ENCODE measurements at regions of chr3 and their contacts with region 1.

Region 1: GRCh38 chr3:185498503-185499396 is at the start of gene TMEM41A:
- DNase-seq: peak; percentile 94 to 98 (median 98)
- ATAC-seq: peak; percentile 98
- H3K4me3 ChIP-seq: peak within 1 kb of the TSS; percentile 100
- H3K27ac ChIP-seq: peak within 1 kb of the TSS; percentile 91
- H3K4me1 ChIP-seq: peaks cover 23 to 25% of the 10 kb centered on the region in 2 experiments
- H3K27me3 ChIP-seq: no peaks in the 10 kb centered on the region
- CTCF ChIP-seq: peak in 1 of 3 experiments; percentile 5; a peak in 2 of 6 replicates
- EP300 ChIP-seq: peak; percentile 64
- POLR2A ChIP-seq: peak; percentile 94
- RAD21 ChIP-seq: peak; percentile 14 to 17; a peak in 1 of 4 replicates
- polyA plus RNA-seq, gene TMEM41A: 23.1 to 30.6 TPM

Region 2: DNA sequence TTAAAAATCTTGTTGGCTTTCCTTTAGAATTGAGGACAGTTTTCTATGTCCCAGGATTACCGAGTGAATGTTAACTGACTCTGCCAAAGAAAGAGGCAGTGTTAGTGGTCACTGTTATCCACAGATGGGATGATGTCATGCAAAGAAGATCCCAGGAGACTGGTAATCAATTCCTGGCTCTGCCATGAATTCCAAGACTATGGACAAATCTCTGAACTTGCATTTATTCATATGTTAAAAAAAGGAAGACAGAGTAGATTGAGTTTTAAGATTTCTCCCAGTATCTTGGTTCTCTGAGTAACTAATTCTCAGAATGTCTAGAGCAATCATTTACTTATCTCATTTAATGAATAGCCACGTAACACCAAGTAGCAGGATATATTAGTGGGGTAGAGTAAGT is 147.4 kb before region 1 on chr3:
- CTCF ChIA-PET with region 1: no interaction called
- POLR2A ChIA-PET with region 1: no interaction called
- in situ Hi-C with region 1: no loop called
- intact Hi-C with region 1: no loop called
- DNase-seq: no peak
- ATAC-seq: no peak
- H3K4me3 ChIP-seq: no peak overlapping the region
- H3K27ac ChIP-seq: no peak overlapping the region
- H3K4me1 ChIP-seq: no peaks in the 10 kb centered on the region
- H3K27me3 ChIP-seq: peaks cover 0 to 1% of the 10 kb centered on the region in 2 experiments; a peak in 1 of 5 replicates
- CTCF ChIP-seq: no peak
- EP300 ChIP-seq: no peak
- POLR2A ChIP-seq: no peak
- RAD21 ChIP-seq: no peak

Region 3: DNA sequence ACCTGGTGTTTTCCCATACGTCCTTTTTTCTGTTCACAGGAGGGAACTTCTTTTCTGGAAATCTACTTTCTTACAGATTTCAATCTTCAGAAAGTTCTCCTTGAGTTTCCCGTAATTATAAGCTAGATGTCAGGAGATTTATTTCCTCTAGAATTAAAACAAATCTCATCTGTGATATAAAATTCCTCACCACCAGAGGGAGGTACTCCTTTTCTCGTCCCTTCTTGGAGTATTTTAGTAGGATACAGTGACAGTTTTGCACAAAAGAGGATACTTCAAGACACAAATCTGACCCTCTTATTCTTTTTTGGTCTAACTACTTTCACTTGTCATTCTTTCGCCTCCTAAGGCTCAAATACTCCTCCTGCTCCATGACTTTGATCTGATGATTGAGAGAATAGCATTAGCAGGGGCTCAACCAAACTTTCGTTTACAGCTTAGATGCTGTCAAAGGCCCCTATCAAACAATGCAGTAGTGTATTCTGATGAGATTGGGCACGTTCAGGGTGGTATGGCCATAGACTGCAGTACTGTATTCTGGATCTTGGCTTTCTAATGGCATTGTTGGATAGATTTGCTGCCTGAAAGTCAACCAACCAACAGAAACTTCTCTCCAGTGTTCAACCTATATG is 37.9 kb before region 1 on chr3:
- CTCF ChIA-PET with region 1: interaction called, 7 read pairs
- POLR2A ChIA-PET with region 1: no interaction called
- in situ Hi-C with region 1: no loop called
- intact Hi-C with region 1: loop called (anchors 2 kb)
- DNase-seq: peak; percentile 44 to 55 (median 46)
- ATAC-seq: peak; percentile 76
- H3K4me3 ChIP-seq: no peak overlapping the region
- H3K27ac ChIP-seq: no peak overlapping the region
- H3K4me1 ChIP-seq: peaks cover 0 to 4% of the 10 kb centered on the region in 2 experiments; a peak in 3 of 5 replicates
- H3K27me3 ChIP-seq: no peaks in the 10 kb centered on the region; a peak in 1 of 5 replicates
- CTCF ChIP-seq: peak; percentile 42 to 73 (median 45); a peak in 4 of 6 replicates
- EP300 ChIP-seq: no peak
- POLR2A ChIP-seq: no peak
- RAD21 ChIP-seq: peak; percentile 44 to 84

Region 4: DNA sequence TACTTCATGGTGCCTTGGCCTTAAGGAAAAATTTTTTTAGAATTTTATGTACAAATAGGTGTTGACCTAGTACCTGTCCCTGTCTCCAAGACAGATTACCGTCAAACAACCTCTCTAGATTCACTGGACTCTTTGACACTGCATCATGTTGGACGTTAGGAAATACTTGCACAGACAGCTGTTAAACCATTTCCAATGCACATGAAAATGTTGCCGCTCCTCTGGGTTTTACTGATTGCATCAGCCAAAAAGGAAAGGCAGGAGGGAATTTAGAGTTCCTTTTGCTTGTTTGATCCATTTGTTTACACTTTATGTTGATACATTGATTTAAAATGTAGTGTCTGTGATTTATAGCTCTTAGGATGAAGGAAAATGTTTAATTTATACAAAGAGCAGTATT is 14.5 kb before region 1 on chr3:
- CTCF ChIA-PET with region 1: no interaction called
- POLR2A ChIA-PET with region 1: interaction called, 18 read pairs
- in situ Hi-C with region 1: no loop called
- intact Hi-C with region 1: no loop called
- DNase-seq: no peak
- ATAC-seq: no peak
- H3K4me3 ChIP-seq: no peak overlapping the region
- H3K27ac ChIP-seq: no peak overlapping the region
- H3K4me1 ChIP-seq: 0 out of 5 replicates have a peak, but pooled peaks cover 0 to 3% of the 10 kb centered on the region in 2 experiments
- H3K27me3 ChIP-seq: no peaks in the 10 kb centered on the region
- CTCF ChIP-seq: no peak
- EP300 ChIP-seq: no peak
- POLR2A ChIP-seq: no peak
- RAD21 ChIP-seq: no peak

Region 5: DNA sequence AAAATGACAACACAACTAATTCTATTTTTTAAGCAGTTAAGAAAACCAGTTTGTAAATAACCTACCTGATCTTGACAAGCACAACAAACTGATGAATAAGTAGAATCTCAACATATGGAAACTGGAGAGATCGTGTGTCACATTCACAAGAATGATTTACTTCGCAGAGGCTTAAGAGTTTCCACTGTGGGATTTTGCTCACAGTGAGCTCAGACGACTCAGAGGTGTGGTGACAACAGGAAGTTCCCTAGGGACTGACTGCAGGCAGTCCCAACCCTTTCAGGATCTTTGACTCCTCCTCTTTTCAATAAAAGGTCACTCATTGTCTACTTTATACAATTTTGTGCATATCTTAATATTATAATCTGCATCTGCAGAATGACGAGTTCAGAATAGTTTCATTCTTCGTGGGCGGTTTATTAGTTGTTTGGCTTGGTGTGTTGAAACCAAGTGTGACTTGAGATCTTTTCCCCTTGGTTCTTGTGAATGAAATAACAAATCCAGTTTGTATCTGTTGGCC is 53.7 kb after region 1 on chr3 and contains the start of gene LIPH:
- CTCF ChIA-PET with region 1: no interaction called
- POLR2A ChIA-PET with region 1: no interaction called
- in situ Hi-C with region 1: no loop called
- intact Hi-C with region 1: loop called (anchors 2 kb)
- DNase-seq: peak; percentile 44 to 75 (median 52)
- ATAC-seq: peak; percentile 87
- H3K4me3 ChIP-seq: peak within 1 kb of the TSS; percentile 5; the same call in 1 of the 2 replicates
- H3K27ac ChIP-seq: peak within 1 kb of the TSS; percentile 57
- H3K4me1 ChIP-seq: peaks cover 9 to 14% of the 10 kb centered on the region in 2 experiments; a peak in 3 of 5 replicates
- H3K27me3 ChIP-seq: no peaks in the 10 kb centered on the region
- CTCF ChIP-seq: no peak
- EP300 ChIP-seq: peak; percentile 32; the same call in 1 of the 2 replicates
- POLR2A ChIP-seq: no peak
- RAD21 ChIP-seq: peak in 1 of 2 experiments; percentile 16; a peak in 1 of 4 replicates
- polyA plus RNA-seq, gene LIPH: 0.80 to 1.8 TPM

Region 6: DNA sequence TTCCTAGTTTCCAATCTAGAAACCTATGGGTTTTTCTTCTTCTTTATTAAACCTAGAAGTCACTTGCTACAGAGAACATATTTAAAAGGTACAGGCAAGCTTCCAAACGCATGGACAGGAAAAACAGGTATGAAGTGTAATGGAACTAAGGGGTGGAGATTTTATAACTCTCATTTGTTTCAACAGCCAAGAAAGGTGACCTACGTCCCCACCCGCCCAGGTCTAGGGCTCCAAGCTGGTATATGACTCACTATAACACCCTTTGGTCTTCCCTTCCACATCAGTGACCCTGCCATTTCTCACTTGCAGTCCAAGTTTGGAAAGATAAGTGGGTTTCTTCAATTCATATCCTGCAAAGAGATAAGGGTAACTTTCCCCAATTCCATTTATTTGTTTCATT is 59.6 kb after region 1 on chr3:
- CTCF ChIA-PET with region 1: no interaction called
- POLR2A ChIA-PET with region 1: no interaction called
- in situ Hi-C with region 1: no loop called
- intact Hi-C with region 1: loop called (anchors 1 kb)
- DNase-seq: peak; percentile 44 to 74 (median 59)
- ATAC-seq: peak; percentile 87
- H3K4me3 ChIP-seq: no peak overlapping the region
- H3K27ac ChIP-seq: peak overlapping the region; percentile 60
- H3K4me1 ChIP-seq: peaks cover 14 to 20% of the 10 kb centered on the region in 2 experiments; a peak in 3 of 5 replicates
- H3K27me3 ChIP-seq: no peaks in the 10 kb centered on the region
- CTCF ChIP-seq: no peak
- EP300 ChIP-seq: no peak
- POLR2A ChIP-seq: no peak
- RAD21 ChIP-seq: no peak